ENCODE measurements at regions of chr4 and their contacts with region 1.

Region 1: GRCh38 chr4:123856689-123857545 is 460.3 kb downstream of the SPRY1 start:
- DNase-seq: peak; percentile 32 to 73 (median 59)
- H3K4me3 ChIP-seq: peak overlapping the region in 5 of 7 experiments; percentile 33 to 67 (median 55)
- H3K27ac ChIP-seq: no peak overlapping the region
- H3K4me1 ChIP-seq: peaks cover 0 to 11% (median 3%) of the 10 kb centered on the region in 4 experiments
- H3K27me3 ChIP-seq: no peaks in the 10 kb centered on the region

Region 2: GRCh38 chr4:123182289-123182688 is 674.6 kb before region 1 on chr4:
- CTCF ChIA-PET with region 1: no interaction called
- POLR2A ChIA-PET with region 1: interaction called, 13 read pairs
- DNase-seq: no peak
- H3K4me3 ChIP-seq: no peak overlapping the region
- H3K27ac ChIP-seq: no peak overlapping the region
- H3K4me1 ChIP-seq: no peaks in the 10 kb centered on the region
- H3K27me3 ChIP-seq: no peaks in the 10 kb centered on the region

Region 3: DNA sequence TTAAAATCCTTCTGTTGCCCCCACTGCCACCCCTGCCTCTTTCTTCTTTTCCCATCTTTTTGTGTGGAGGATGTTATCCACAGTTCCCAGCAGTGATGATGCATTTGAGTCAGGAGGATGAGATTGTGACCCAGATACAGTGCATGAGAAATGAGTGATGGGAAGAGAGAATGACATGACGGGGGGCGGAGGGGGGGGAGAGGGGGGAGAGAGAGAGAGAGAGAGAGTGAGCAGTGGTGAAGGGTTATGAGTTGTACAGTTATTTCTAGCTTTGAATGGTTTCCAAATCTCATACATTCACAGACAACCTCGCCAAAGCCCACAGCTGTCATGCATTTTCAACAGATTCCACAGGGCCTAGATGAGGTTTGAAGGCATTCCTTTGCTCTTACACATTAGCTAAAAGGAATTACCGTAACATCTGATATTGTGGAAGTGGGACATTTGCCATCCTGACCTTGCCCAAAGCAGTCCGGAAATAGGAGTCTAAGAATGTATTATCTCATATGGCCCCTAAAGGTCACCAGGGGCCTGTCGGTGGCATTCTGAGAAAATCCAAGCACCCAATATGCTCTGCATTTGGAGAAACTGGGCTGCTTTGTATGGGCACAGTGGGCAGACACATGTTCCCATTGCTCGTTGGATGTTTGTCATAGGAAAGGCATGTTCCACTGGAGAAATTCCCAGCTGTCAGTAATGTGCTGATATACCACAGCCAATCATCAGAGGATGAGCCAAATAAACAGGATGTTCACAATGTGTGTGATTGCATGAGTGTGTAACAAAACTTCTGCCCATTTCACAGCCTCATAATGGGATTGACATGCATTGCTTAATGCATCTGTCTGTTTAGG is 24.5 kb before region 1 on chr4:
- CTCF ChIA-PET with region 1: no interaction called
- POLR2A ChIA-PET with region 1: no interaction called
- DNase-seq: no peak
- H3K4me3 ChIP-seq: no peak overlapping the region
- H3K27ac ChIP-seq: no peak overlapping the region
- H3K4me1 ChIP-seq: peaks cover 0 to 2% (median 0%) of the 10 kb centered on the region in 4 experiments
- H3K27me3 ChIP-seq: no peaks in the 10 kb centered on the region

Region 4: DNA sequence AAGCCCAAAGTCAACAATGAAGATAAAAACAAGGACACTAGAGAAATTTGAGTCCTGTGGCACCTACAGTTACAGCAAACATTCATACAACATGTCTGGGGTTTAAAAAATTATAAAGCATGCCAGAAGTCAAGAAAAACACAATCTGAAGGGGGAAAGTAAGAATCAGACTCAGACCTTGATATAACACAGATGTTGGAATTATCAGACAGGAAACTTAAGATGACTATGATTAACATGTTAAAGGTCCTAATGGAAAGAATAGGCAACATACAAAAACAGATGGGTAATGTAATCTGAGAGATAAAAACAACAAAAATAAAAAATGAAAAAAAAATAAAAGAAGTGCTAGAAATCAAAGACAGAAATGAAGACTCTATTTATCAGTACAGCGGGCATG is 13.8 kb before region 1 on chr4:
- CTCF ChIA-PET with region 1: no interaction called
- POLR2A ChIA-PET with region 1: no interaction called
- DNase-seq: no peak
- H3K4me3 ChIP-seq: no peak overlapping the region
- H3K27ac ChIP-seq: no peak overlapping the region
- H3K4me1 ChIP-seq: no peaks in the 10 kb centered on the region
- H3K27me3 ChIP-seq: no peaks in the 10 kb centered on the region

Region 5: GRCh38 chr4:123869286-123870060 is 12.6 kb after region 1 on chr4:
- CTCF ChIA-PET with region 1: no interaction called
- POLR2A ChIA-PET with region 1: no interaction called
- DNase-seq: no peak
- H3K4me3 ChIP-seq: no peak overlapping the region
- H3K27ac ChIP-seq: no peak overlapping the region
- H3K4me1 ChIP-seq: no peaks in the 10 kb centered on the region
- H3K27me3 ChIP-seq: no peaks in the 10 kb centered on the region